ENCODE measurements at regions of chr11 and their contacts with region 1.

Region 1: GRCh38 chr11:128859563-128860441 is 7.3 kb downstream of the KCNJ1 start:
- DNase-seq: no peak
- ATAC-seq: peak; percentile 99
- H3K4me3 ChIP-seq: no peak overlapping the region
- H3K27ac ChIP-seq: no peak overlapping the region
- H3K4me1 ChIP-seq: no peaks in the 10 kb centered on the region
- H3K27me3 ChIP-seq: peaks cover 0 to 2% of the 10 kb centered on the region in 2 experiments; a peak in 1 of 4 replicates
- CTCF ChIP-seq: peak; percentile 89 to 94 (median 93); a peak in 5 of 6 replicates
- EP300 ChIP-seq: no peak
- POLR2A ChIP-seq: no peak
- RAD21 ChIP-seq: peak; percentile 71

Region 2: DNA sequence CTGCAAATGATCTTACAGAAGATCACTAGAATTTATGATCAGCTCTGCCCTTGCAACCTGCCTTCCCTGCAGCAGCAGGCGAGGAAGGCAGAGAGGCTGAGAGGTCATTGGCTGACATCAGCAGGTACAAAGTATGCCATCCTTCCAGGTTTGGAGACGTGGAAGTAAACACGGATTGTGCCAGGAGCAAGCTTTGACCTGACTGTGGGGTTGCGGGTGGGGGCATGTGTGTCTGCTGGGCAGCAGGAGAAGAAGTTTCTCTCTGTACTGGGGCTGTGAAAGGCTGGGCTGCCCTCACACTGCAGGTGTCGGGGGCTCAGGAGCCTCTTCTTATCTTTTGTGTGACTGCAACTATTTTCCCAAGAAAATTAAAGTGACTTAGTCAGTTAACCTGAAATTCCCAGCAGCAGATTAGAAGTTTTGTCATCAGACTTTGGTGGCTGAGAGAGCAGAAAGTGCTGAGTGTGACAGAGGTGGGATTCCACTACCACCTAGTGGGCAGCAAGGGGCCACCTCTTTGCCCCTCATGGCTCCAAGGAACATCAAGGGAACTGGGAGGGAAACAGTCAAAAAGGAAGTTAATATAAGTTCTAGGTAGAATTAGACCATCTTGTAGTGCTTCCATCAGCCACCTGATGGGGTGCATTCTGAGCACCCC is 838.3 kb before region 1 on chr11:
- CTCF ChIA-PET with region 1: no interaction called
- POLR2A ChIA-PET with region 1: no interaction called
- RAD21 ChIA-PET with region 1: no interaction called
- SMC1A ChIA-PET with region 1: no interaction called
- in situ Hi-C with region 1: loop called (anchors 10 kb)
- intact Hi-C with region 1: no loop called
- DNase-seq: no peak
- ATAC-seq: no peak
- H3K4me3 ChIP-seq: no peak overlapping the region
- H3K27ac ChIP-seq: no peak overlapping the region
- H3K4me1 ChIP-seq: no peaks in the 10 kb centered on the region
- H3K27me3 ChIP-seq: no peaks in the 10 kb centered on the region; a peak in 1 of 4 replicates
- CTCF ChIP-seq: no peak; a peak in 1 of 6 replicates
- EP300 ChIP-seq: no peak
- POLR2A ChIP-seq: no peak
- RAD21 ChIP-seq: no peak

Region 3: GRCh38 chr11:128026596-128026995 is 833.2 kb before region 1 on chr11:
- CTCF ChIA-PET with region 1: no interaction called
- POLR2A ChIA-PET with region 1: no interaction called
- RAD21 ChIA-PET with region 1: interaction called, 3 read pairs
- SMC1A ChIA-PET with region 1: no interaction called
- in situ Hi-C with region 1: loop called (anchors 10 kb)
- intact Hi-C with region 1: loop called (anchors 1 kb)
- DNase-seq: no peak
- ATAC-seq: no peak
- H3K4me3 ChIP-seq: no peak overlapping the region
- H3K27ac ChIP-seq: no peak overlapping the region
- H3K4me1 ChIP-seq: no peaks in the 10 kb centered on the region
- H3K27me3 ChIP-seq: no peaks in the 10 kb centered on the region; a peak in 2 of 4 replicates
- CTCF ChIP-seq: no peak
- EP300 ChIP-seq: no peak
- POLR2A ChIP-seq: no peak
- RAD21 ChIP-seq: no peak

Region 4: DNA sequence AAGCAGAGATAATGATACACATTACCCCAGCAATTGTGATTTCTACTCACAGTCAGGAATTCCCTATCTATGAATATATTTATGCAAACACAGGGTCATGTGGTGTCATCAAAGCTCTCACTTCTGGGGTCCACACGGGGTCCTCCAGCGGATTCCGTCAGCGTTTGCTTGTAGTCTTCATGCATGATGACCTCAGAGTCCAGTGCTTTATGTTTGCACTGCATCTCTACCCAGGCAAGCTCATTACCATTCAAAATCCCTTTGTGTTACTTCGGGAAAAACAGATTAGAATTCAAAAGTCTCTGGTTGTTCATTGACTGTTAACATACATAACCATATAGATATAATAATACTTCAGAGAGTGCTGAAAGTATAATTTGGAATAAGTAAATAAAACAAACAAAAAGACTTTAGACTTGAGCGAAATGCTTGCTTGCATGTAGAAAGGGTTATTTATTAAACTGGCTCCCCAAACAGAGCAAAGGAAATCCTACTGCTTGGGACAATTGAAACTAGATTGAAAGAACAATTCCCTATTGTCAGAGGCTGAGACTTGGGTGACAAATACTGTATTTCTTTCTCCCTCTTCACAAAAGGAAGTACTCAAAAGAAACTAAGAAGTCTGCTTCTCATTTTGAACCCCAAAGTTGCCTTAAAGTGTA is 695.6 kb before region 1 on chr11:
- CTCF ChIA-PET with region 1: interaction called, 26 read pairs
- POLR2A ChIA-PET with region 1: no interaction called
- RAD21 ChIA-PET with region 1: no interaction called
- SMC1A ChIA-PET with region 1: no interaction called
- in situ Hi-C with region 1: loop called (anchors 5 kb)
- intact Hi-C with region 1: no loop called
- DNase-seq: no peak
- ATAC-seq: no peak
- H3K4me3 ChIP-seq: no peak overlapping the region
- H3K27ac ChIP-seq: no peak overlapping the region
- H3K4me1 ChIP-seq: no peaks in the 10 kb centered on the region
- H3K27me3 ChIP-seq: no peaks in the 10 kb centered on the region; a peak in 2 of 4 replicates
- CTCF ChIP-seq: no peak
- EP300 ChIP-seq: no peak
- POLR2A ChIP-seq: no peak
- RAD21 ChIP-seq: no peak

Region 5: DNA sequence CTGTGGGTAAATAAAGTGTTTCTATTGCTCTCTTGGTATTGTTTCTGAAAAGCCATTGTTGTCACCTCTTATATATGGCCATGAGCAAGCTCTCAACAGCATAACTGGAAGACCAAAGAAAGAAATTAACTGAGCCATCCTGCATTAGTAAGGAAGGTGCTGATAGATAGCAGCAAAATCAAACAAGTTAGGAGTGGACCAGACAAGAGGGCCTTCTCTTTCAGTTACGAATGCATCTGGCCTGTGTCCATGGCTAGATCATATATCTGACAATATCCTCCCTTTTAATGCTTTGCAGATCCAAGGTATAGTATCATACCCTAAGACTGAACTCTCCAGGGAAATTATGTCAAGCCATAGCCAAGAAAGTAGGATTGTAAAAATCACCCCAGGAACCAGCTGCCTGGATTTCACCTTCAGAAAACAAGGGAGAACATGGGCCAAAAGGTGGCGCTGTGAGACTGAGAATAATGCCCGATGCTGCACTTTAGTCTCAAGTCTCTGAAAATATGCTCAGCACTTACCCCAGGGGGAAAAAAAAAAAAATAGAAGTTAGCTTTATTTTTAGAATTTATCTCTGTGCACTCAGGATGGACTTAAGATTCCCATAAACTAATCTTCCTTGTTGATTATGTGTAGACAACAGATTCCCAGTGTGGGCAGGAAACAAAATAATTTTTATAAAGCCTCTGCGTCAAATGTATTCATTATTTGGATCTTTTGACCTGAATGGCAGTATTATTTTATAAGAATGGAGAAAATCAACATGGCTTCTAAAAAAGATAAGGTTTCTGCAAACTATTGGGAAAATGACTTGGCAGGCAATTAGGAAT is 687.5 kb before region 1 on chr11:
- CTCF ChIA-PET with region 1: interaction called, 32 read pairs
- POLR2A ChIA-PET with region 1: no interaction called
- RAD21 ChIA-PET with region 1: interaction called, 7 read pairs
- SMC1A ChIA-PET with region 1: interaction called, 9 read pairs
- in situ Hi-C with region 1: loop called (anchors 5 kb)
- intact Hi-C with region 1: loop called (anchors 1 kb)
- DNase-seq: peak; percentile 38
- ATAC-seq: peak; percentile 93
- H3K4me3 ChIP-seq: no peak overlapping the region
- H3K27ac ChIP-seq: no peak overlapping the region
- H3K4me1 ChIP-seq: no peaks in the 10 kb centered on the region
- H3K27me3 ChIP-seq: no peaks in the 10 kb centered on the region; a peak in 2 of 4 replicates
- CTCF ChIP-seq: peak; percentile 68 to 91 (median 72)
- EP300 ChIP-seq: no peak
- POLR2A ChIP-seq: no peak
- RAD21 ChIP-seq: peak; percentile 97

Region 6: DNA sequence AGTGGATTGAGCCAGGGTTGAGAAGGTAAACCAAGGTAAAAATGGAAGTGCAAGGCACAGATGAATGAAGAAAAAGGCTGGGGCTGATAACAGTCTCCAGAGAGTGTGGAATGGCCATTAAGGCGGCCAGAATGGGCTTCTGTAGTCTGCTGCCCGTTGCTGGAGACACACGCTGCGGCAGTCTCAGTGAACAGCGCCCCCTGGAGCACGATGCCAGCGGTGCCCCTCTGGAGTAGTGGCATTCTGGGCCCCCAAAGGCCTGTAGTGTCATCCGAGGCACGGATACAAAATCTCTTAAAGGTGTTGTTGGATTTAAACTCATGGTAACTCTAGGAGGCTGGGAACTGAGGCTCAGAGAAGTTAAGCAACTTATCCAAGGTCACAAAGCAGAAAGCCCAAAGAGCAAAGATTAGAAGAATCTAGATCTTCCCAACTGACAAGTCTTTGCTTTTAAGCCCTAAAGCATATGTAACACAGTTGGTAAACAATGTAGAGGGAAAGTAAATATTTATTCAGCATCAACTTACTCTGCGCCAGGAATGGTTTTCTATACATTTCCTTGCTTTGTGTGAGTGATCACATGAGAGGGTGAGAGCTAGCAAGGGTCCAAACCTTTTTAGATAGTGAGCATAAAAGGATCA is 10.9 kb before region 1 on chr11:
- CTCF ChIA-PET with region 1: interaction called, 19 read pairs
- POLR2A ChIA-PET with region 1: no interaction called
- RAD21 ChIA-PET with region 1: interaction called, 3 read pairs
- SMC1A ChIA-PET with region 1: interaction called, 4 read pairs
- in situ Hi-C with region 1: no loop called
- intact Hi-C with region 1: no loop called
- DNase-seq: no peak
- ATAC-seq: peak; percentile 100
- H3K4me3 ChIP-seq: no peak overlapping the region
- H3K27ac ChIP-seq: no peak overlapping the region
- H3K4me1 ChIP-seq: peaks cover 4% of the 10 kb centered on the region; the same call in 1 of the 2 replicates
- H3K27me3 ChIP-seq: no peaks in the 10 kb centered on the region
- CTCF ChIP-seq: peak; percentile 81 to 91 (median 88)
- EP300 ChIP-seq: no peak
- POLR2A ChIP-seq: no peak
- RAD21 ChIP-seq: peak; percentile 68